Adrenal gland (tissue), 19 donors: ENCODE measurements at regions of chr2 and their contacts with region 1.

Region 1: DNA sequence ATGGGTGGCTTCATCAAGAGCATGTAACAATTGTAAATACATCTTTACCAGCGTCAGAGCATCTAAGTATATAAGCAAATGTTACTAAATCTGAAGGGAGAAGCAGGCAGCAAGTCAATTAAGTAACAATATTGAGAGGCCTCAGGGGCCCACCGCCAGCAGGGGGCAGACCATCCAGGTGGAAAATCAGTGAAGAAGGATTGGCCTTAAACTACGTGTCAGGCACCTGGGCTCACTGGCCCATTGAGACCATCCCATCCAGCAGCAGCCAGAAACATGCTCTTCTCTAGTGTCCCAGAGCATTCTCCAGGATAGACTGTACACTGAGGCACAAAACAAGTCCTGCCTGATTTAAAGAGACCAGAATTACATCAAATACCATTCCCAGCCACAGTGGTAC is 96.2 kb upstream of the SNTG2 start:
- DNase-seq: peak in 6 of 7 donors; percentile 37 to 79 (median 66)
- H3K4me3 ChIP-seq: no peak overlapping the region
- H3K27ac ChIP-seq: no peak overlapping the region
- H3K4me1 ChIP-seq: no peaks in the 10 kb centered on the region
- H3K27me3 ChIP-seq: no peaks in the 10 kb centered on the region
- CTCF ChIP-seq: peak; percentile 44 to 71 (median 64)
- POLR2A ChIP-seq: no peak

Region 2: DNA sequence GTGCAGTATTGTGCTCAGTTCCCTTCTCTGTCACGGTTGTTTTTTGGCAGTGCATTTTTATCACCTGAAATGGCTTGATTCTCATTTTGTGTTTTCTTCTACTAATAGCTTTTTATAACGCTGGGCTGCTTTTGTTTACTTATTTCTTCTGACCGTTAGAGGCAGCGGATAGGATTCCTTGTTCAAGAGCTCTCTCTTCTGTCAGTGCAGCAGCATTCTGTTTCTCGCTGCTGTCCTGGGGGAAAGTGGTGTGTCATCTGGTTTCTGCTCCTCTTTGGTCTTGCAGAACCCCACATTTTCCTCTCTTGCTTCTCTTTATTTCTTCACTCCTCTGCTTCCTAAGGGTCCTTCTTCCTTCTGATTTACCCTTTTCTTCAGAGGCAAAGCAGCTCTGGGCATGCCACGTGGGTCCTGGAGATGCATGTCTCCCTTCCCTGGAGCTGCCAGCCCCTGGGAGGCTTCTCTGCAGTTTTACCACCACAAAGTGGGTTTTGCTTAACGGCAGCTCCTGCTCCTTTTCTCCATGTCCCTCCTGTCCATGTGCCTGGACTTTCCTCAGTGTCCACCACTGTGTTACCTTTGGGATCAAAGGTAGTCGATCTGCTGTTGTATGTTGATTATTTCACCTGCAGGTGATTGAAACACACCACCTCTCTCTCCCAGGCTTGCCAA is 48.9 kb after region 1 on chr2:
- intact Hi-C with region 1: loop called in 1 of 2 experiments (anchors 5 kb)
- DNase-seq: peak in 2 of 7 donors; percentile 14 to 31
- H3K4me3 ChIP-seq: no peak overlapping the region
- H3K27ac ChIP-seq: no peak overlapping the region
- H3K4me1 ChIP-seq: no peaks in the 10 kb centered on the region
- H3K27me3 ChIP-seq: no peaks in the 10 kb centered on the region
- CTCF ChIP-seq: peak in 3 of 6 experiments; percentile 20 to 34 (median 30)
- POLR2A ChIP-seq: no peak

Region 3: GRCh38 chr2:1546023-1546591 is 691.6 kb after region 1 on chr2:
- intact Hi-C with region 1: loop called (anchors 10 kb)
- DNase-seq: peak in 6 of 7 donors; percentile 21 to 71 (median 52)
- H3K4me3 ChIP-seq: no peak overlapping the region
- H3K27ac ChIP-seq: no peak overlapping the region
- H3K4me1 ChIP-seq: no peaks in the 10 kb centered on the region
- H3K27me3 ChIP-seq: no peaks in the 10 kb centered on the region
- CTCF ChIP-seq: peak; percentile 67 to 82 (median 76)
- POLR2A ChIP-seq: no peak